ENCODE measurements at regions of chr4 and their contacts with region 1.

Region 1: GRCh38 chr4:46648088-46648744 is 258.3 kb upstream of the GABRA2 start:
- DNase-seq: peak; percentile 72
- H3K4me3 ChIP-seq: no peak overlapping the region
- H3K27ac ChIP-seq: no peak overlapping the region
- H3K4me1 ChIP-seq: no peaks in the 10 kb centered on the region
- H3K27me3 ChIP-seq: no peaks in the 10 kb centered on the region
- CTCF ChIP-seq: peak; percentile 94 to 97

Region 2: GRCh38 chr4:44760142-44760898 is 1887.9 kb before region 1 on chr4:
- CTCF ChIA-PET with region 1: no interaction called
- dilution Hi-C with region 1: no loop called
- in situ Hi-C with region 1: no loop called
- intact Hi-C with region 1: loop called (anchors 2 kb)
- DNase-seq: peak; percentile 12
- H3K4me3 ChIP-seq: no peak overlapping the region
- H3K27ac ChIP-seq: no peak overlapping the region
- H3K4me1 ChIP-seq: peaks cover 4% of the 10 kb centered on the region
- H3K27me3 ChIP-seq: no peaks in the 10 kb centered on the region
- CTCF ChIP-seq: peak; percentile 44 to 47

Region 3: GRCh38 chr4:46329118-46329976 is 318.9 kb before region 1 on chr4:
- CTCF ChIA-PET with region 1: interaction called, 62 read pairs
- dilution Hi-C with region 1: no loop called
- in situ Hi-C with region 1: loop called (anchors 5 to 10 kb)
- intact Hi-C with region 1: loop called (anchors 1 kb)
- DNase-seq: peak; percentile 60
- H3K4me3 ChIP-seq: no peak overlapping the region
- H3K27ac ChIP-seq: no peak overlapping the region
- H3K4me1 ChIP-seq: no peaks in the 10 kb centered on the region
- H3K27me3 ChIP-seq: no peaks in the 10 kb centered on the region
- CTCF ChIP-seq: peak; percentile 66 to 85

Region 4: DNA sequence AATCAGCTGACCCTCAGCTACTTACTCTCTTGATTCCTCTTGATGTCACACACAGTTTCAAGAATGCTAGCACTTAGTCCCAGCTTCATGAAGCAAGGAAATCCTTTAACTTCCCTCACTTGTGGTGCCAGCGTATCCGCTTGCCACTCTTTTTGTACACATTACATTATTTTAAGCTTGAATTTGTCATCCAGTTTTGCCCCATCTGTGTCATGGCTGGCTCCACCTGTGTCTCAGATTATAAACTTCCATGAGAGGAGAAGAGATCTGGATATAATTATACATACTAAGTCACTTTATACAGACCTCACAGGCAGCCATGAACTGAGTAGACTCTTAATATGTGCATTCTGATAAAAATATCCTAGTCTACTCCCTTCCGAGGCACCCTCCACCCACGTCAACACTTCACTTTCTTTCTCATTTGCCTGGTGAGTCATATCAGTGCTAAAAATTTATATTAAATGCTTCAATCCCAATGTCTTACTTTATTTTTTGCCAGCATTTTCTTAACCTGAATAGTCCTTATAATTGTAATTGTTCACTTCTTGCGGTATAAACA is 293.4 kb before region 1 on chr4:
- CTCF ChIA-PET with region 1: interaction called, 11 read pairs
- dilution Hi-C with region 1: no loop called
- in situ Hi-C with region 1: no loop called
- intact Hi-C with region 1: no loop called
- DNase-seq: no peak
- H3K4me3 ChIP-seq: no peak overlapping the region
- H3K27ac ChIP-seq: no peak overlapping the region
- H3K4me1 ChIP-seq: no peaks in the 10 kb centered on the region
- H3K27me3 ChIP-seq: no peaks in the 10 kb centered on the region
- CTCF ChIP-seq: no peak

Region 5: GRCh38 chr4:46432923-46433322 is 215.3 kb before region 1 on chr4:
- CTCF ChIA-PET with region 1: no interaction called
- dilution Hi-C with region 1: no loop called
- in situ Hi-C with region 1: no loop called
- intact Hi-C with region 1: no loop called
- DNase-seq: peak; percentile 59
- H3K4me3 ChIP-seq: no peak overlapping the region
- H3K27ac ChIP-seq: no peak overlapping the region
- H3K4me1 ChIP-seq: peaks cover 14% of the 10 kb centered on the region
- H3K27me3 ChIP-seq: no peaks in the 10 kb centered on the region
- CTCF ChIP-seq: no peak

Region 6: DNA sequence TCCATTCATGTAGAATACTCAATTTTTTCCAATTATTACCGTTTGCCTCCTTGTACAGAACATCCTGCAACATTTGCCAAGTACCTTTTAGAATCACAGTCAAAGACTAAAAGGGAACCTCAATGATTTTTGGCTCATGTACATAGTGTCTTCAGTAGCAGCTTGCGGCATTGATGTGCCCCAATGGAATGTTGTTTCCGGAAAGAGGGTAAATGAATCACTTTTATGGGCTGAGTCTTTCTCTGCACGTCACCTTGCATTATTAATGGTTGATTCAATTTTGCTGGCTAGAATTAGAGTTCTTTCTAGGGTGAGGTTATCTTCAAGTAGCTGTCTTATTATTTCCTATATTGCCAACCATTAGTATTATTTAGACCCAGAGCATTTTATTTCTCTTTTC is 141.3 kb before region 1 on chr4:
- CTCF ChIA-PET with region 1: no interaction called
- dilution Hi-C with region 1: no loop called
- in situ Hi-C with region 1: no loop called
- intact Hi-C with region 1: no loop called
- DNase-seq: peak; percentile 90
- H3K4me3 ChIP-seq: no peak overlapping the region
- H3K27ac ChIP-seq: peak overlapping the region; percentile 69
- H3K4me1 ChIP-seq: peaks cover 49% of the 10 kb centered on the region
- H3K27me3 ChIP-seq: no peaks in the 10 kb centered on the region
- CTCF ChIP-seq: no peak